ENCODE measurements at regions of chr7 and their contacts with region 1.

Region 1: DNA sequence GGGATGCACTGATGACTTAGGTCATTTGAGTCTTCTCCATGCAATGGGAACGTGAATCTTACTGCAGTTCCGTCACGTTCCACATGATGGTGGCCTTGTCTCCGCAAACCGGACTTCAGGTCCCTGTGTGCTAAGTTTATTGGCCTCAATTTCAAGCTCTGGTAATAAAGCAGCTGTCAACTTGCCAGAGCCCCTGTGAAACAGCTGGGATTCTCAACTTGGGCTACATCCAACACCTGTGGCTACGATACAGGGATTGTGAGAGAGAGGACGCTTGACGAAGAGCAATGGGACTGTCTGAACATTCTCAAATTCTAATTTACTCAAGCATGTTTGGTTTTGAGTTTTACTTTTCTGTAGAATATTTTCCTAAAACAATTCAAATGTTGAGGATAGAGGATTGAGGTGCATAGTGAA is 174.2 kb downstream of the PTN start:
- DNase-seq: peak; percentile 29
- H3K4me3 ChIP-seq: no peak overlapping the region
- H3K27ac ChIP-seq: no peak overlapping the region
- H3K4me1 ChIP-seq: no peaks in the 10 kb centered on the region
- H3K27me3 ChIP-seq: no peaks in the 10 kb centered on the region
- CTCF ChIP-seq: peak; percentile 84 to 88

Region 2: DNA sequence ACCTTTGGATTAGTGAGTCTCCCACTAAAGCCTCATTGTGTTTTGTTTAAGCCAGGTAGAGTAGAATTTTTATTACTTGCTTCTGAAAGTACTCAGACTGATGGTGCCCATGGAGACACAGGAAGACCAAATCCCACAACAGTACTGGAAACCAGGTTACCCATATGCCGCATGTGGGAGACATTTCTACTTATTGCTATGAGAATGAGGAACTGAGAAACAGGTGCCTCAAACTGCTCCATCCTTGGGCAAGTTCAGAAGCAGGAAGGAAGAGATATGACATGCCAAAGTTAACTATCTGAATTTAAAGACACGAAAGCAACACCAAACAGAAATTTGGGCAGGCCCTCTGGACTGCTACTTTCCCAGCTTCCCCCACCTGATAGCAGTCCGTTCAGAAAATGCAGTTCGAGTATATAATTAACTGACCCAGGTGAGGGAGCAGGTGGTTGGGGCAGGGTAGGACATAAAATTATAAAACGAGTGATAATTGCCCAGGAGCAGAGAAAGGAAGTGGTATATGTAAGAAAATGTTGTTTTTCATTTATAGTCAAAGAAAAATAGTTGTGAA is 809.9 kb before region 1 on chr7:
- CTCF ChIA-PET with region 1: no interaction called
- dilution Hi-C with region 1: no loop called
- in situ Hi-C with region 1: no loop called
- intact Hi-C with region 1: no loop called
- DNase-seq: no peak
- H3K4me3 ChIP-seq: no peak overlapping the region
- H3K27ac ChIP-seq: no peak overlapping the region
- H3K4me1 ChIP-seq: no peaks in the 10 kb centered on the region
- H3K27me3 ChIP-seq: no peaks in the 10 kb centered on the region
- CTCF ChIP-seq: no peak

Region 3: DNA sequence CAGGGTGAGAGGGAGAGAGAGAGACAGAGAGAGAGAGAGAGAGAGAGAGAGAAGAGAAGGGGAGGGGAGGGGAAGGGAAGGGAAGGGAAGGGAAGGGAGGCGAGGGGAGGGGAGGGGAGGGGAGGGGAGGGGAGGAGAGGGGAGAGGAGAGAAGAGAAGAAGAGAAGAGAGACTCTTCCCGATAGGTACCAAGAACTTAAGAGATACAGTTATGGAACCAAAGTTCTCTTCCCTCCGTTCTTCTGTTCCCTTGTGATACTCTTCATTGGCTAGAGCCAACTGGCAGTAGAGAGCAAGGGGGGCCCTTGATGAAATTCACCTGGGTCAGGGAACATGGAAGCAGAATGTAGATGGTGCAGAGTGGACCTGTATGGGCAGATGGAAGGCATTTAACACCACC is 52.2 kb after region 1 on chr7:
- CTCF ChIA-PET with region 1: no interaction called
- dilution Hi-C with region 1: no loop called
- in situ Hi-C with region 1: no loop called
- intact Hi-C with region 1: no loop called
- DNase-seq: no peak
- H3K4me3 ChIP-seq: no peak overlapping the region
- H3K27ac ChIP-seq: no peak overlapping the region
- H3K4me1 ChIP-seq: no peaks in the 10 kb centered on the region
- H3K27me3 ChIP-seq: peaks cover 4% of the 10 kb centered on the region
- CTCF ChIP-seq: no peak

Region 4: GRCh38 chr7:137488038-137488437 is 318.7 kb after region 1 on chr7:
- CTCF ChIA-PET with region 1: no interaction called
- dilution Hi-C with region 1: no loop called
- in situ Hi-C with region 1: no loop called
- intact Hi-C with region 1: loop called (anchors 1 kb)
- DNase-seq: no peak
- H3K4me3 ChIP-seq: no peak overlapping the region
- H3K27ac ChIP-seq: no peak overlapping the region
- H3K4me1 ChIP-seq: no peaks in the 10 kb centered on the region
- H3K27me3 ChIP-seq: no peaks in the 10 kb centered on the region
- CTCF ChIP-seq: peak in 1 of 2 donors; percentile 11